ENCODE measurements at regions of chr2 and their contacts with region 1.

Region 1: DNA sequence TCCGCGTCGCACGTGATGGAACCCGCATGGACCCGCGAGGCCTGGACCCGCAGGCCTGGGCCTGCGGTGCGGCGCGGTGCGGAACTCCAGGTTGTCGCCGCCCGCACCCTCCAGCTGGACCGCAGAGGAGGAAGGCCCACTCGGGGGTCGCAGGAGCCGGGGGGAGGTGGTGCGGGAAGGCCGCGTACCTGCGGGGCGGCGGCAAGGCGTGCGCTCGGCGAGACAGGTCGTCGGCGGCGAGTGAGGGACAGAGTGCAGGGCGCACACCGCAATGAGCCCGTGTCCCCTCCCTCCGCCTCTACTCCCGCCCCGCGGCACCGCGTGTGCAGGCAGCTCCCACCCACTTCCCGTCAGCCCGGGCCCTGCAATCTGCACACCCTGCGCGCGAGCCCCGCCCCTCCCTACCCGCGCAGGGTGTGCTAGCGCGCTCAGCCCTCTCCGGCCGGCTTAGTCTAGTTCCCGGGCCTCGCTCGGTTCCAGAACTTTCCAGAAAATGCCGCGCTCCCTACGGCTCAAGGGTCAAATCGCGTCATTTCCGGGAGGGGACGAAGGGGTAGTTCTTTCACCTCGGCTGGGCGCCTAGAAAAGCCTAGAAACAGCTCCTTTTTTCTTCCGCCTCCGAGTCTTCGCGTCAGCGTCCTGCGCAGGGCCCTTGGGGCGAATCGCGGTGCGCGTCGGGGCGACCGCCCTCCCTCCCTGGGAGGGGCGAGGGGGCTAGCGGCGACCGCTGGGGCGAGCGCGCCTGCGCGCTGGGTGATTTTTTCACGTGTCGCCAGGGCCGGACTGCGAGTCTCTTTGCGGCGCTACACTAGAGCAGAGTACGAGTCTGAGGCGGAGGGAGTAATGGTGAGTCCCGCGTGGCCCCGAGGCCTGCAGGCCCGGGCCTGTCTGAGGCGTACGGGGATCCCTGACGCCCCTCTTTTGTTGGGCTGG is at the starts of genes HSPD1 and HSPE1:
- DNase-seq: peak; percentile 98
- ATAC-seq: peak; percentile 97
- total RNA-seq, gene HSPD1: 152 TPM
- total RNA-seq, gene HSPE1: 118 TPM

Region 2: DNA sequence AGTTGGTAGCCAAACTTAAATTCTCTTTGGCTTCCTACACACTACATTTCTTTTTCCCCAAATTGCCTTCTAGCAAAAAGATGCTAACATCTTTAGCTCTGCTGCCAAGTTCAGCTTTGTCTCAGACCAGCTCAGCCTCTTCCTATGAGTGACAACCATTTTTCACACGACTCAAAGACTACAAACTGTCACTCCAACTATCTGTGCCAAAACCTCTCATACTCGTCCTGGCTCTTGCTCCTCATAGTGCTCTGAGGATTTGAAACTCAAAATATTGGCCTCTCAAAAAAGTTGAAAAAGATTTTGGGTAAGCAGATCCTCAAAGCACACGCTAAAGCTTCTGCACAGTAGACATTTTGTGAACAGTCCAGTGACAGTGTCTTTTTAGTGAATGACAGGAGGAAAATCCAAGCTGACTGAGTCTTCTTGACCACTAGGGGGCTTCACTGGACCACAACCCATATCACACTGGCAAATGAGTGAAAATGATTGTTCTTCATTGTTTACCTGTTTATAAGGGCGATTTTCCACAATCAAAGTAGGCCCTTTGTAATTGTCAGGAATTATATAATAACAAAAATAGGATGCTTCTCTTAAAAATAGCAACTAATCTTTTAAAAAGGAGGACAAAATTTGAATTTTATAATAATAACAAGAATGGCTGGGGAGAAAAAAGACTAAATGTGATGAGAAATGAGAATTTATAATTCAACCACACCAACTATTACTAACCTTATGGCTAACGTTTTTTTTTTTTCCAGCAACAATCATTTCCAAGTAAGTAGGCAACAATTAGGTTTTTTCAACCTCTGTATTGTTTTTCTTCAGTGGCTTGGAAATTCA is 487.8 kb before region 1 on chr2:
- intact Hi-C with region 1: no loop called
- DNase-seq: no peak
- ATAC-seq: peak; percentile 79

Region 3: DNA sequence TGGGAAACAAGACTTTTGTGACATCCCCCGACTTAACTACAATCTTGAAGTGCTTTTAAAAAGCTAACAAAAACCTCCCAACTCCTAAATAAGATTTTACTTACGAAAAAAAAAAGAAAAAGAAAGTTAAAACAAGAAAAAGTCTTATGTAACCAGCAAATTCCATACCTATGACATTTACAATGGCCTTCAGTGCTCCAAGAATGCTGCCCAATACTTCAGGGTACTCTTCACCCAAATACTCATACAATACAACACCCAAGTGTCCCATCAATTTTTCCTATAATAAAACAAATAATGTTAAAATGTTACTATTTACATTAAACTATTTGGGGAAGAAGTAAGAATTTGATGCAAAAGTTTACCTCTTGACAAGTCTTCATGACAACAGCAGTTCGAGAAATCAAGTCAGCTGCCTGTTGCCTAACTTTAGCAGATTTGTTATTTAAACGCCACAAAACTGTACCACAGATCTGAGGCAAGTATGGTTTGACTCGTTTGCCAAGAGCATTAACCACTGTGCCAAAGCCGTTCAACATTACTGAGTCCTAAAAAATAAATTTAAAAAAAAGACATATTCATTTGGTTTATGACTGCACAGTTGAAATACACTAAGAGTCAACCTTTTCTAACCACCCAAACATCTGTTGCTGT is 99.8 kb before region 1 on chr2:
- intact Hi-C with region 1: loop called (anchors 10 kb)
- DNase-seq: no peak
- ATAC-seq: no peak

Region 4: DNA sequence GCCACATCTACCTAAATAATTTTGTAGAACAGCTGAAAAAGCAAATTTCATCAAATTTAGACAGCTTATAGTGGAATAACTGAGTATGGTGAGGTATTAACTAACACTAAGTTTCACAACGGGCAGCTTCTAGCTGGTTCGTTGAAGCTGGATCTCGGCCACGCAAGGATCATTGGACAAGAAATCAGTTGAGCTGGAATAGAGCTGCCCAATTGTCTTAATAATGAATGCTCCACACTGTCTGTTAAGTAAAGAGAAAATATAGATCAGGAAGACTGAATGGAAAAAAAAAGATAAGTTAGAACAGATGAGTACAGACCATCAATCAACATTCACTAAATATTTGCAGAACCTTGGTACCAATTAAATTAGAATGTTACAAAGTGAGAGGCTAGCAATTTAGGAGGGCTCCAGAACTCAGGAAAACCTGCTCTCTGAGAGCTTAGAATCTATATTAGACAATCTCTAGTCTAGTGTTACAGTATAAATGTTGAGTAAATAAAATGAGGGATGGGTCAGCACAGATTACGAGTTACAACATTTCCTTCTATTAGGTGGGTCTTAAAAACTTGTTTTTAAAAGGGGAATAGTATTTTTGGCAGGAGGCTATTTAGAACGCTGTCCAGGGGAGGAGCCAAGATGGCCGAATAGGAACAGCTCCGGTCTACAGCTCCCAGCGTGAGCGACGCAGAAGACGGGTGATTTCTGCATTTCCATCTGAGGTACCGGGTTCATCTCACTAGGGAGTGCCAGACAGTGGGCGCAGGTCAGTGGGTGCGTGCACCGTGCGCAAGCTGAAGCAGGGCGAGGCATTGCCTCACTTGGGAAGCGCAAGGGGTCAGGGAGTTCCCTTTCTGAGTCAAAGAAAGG is 228.7 kb after region 1 on chr2:
- intact Hi-C with region 1: no loop called
- DNase-seq: no peak
- ATAC-seq: no peak